GM12878 (cell line): ENCODE measurements at regions of chr1 and their contacts with region 1.

Region 1: GRCh38 chr1:116826818-116827606 is 72.8 kb downstream of the CD2 start:
- DNase-seq: peak; percentile 97
- ATAC-seq: peak; percentile 87
- H3K4me3 ChIP-seq: no peak overlapping the region
- H3K27ac ChIP-seq: peak overlapping the region; percentile 60
- H3K4me1 ChIP-seq: peaks cover 23% of the 10 kb centered on the region
- H3K27me3 ChIP-seq: no peaks in the 10 kb centered on the region; a peak in 1 of 4 replicates
- CTCF ChIP-seq: no peak
- EP300 ChIP-seq: peak; percentile 17 to 90; a peak in 2 of 4 replicates
- POLR2A ChIP-seq: no peak
- RAD21 ChIP-seq: 0 out of 2 replicates have a peak, but pooled peaks have one; percentile 10

Region 2: DNA sequence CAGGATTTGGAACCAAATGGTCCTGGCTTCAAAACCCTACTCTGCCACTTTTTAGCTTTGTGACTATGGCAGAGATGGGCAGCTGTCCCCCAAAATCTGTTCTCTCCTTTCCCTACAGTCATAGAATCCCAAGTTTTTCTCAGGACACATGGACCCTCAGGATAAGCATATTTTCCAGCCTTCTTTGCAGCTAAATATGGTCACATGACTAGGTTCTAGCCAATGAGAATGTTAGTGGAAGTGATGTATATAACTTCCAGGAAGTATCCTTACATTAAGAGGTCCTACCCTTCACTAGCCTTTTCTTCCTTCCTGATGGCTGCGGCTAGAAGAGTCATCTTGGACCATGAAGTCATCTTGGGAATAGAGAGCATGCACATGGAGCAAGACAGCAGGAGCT is 165.4 kb before region 1 on chr1:
- CTCF ChIA-PET with region 1: no interaction called
- POLR2A ChIA-PET with region 1: no interaction called
- RAD21 ChIA-PET with region 1: no interaction called
- SMC1A ChIA-PET with region 1: no interaction called
- in situ Hi-C with region 1: no loop called
- intact Hi-C with region 1: no loop called
- DNase-seq: no peak
- ATAC-seq: no peak
- H3K4me3 ChIP-seq: no peak overlapping the region
- H3K27ac ChIP-seq: no peak overlapping the region
- H3K4me1 ChIP-seq: no peaks in the 10 kb centered on the region
- H3K27me3 ChIP-seq: peaks cover 0 to 12% of the 10 kb centered on the region in 2 experiments; a peak in 2 of 4 replicates
- CTCF ChIP-seq: no peak
- EP300 ChIP-seq: no peak
- POLR2A ChIP-seq: no peak
- RAD21 ChIP-seq: no peak

Region 3: GRCh38 chr1:116763787-116764465 is 63.1 kb before region 1 on chr1:
- CTCF ChIA-PET with region 1: interaction called, 9 read pairs
- POLR2A ChIA-PET with region 1: interaction called, 15 read pairs
- RAD21 ChIA-PET with region 1: interaction called, 45 read pairs
- SMC1A ChIA-PET with region 1: interaction called, 64 read pairs
- in situ Hi-C with region 1: no loop called
- intact Hi-C with region 1: no loop called
- DNase-seq: no peak
- ATAC-seq: peak; percentile 22
- H3K4me3 ChIP-seq: no peak overlapping the region
- H3K27ac ChIP-seq: no peak overlapping the region
- H3K4me1 ChIP-seq: peaks cover 10% of the 10 kb centered on the region
- H3K27me3 ChIP-seq: no peaks in the 10 kb centered on the region; a peak in 1 of 4 replicates
- CTCF ChIP-seq: peak; percentile 25 to 41 (median 36); a peak in 5 of 6 replicates
- EP300 ChIP-seq: no peak
- POLR2A ChIP-seq: no peak
- RAD21 ChIP-seq: peak; percentile 44

Region 4: GRCh38 chr1:116794804-116795481 is 32.1 kb before region 1 on chr1:
- CTCF ChIA-PET with region 1: interaction called, 4 read pairs
- POLR2A ChIA-PET with region 1: interaction called, 12 read pairs
- RAD21 ChIA-PET with region 1: interaction called, 26 read pairs
- SMC1A ChIA-PET with region 1: interaction called, 13 read pairs
- in situ Hi-C with region 1: no loop called
- intact Hi-C with region 1: no loop called
- DNase-seq: peak; percentile 87
- ATAC-seq: peak; percentile 96
- H3K4me3 ChIP-seq: peak overlapping the region; percentile 14; the same call in 1 of the 2 replicates
- H3K27ac ChIP-seq: peak overlapping the region; percentile 57
- H3K4me1 ChIP-seq: peaks cover 11% of the 10 kb centered on the region
- H3K27me3 ChIP-seq: no peaks in the 10 kb centered on the region
- CTCF ChIP-seq: no peak
- EP300 ChIP-seq: peak; percentile 71 to 87
- POLR2A ChIP-seq: no peak
- RAD21 ChIP-seq: no peak

Region 5: DNA sequence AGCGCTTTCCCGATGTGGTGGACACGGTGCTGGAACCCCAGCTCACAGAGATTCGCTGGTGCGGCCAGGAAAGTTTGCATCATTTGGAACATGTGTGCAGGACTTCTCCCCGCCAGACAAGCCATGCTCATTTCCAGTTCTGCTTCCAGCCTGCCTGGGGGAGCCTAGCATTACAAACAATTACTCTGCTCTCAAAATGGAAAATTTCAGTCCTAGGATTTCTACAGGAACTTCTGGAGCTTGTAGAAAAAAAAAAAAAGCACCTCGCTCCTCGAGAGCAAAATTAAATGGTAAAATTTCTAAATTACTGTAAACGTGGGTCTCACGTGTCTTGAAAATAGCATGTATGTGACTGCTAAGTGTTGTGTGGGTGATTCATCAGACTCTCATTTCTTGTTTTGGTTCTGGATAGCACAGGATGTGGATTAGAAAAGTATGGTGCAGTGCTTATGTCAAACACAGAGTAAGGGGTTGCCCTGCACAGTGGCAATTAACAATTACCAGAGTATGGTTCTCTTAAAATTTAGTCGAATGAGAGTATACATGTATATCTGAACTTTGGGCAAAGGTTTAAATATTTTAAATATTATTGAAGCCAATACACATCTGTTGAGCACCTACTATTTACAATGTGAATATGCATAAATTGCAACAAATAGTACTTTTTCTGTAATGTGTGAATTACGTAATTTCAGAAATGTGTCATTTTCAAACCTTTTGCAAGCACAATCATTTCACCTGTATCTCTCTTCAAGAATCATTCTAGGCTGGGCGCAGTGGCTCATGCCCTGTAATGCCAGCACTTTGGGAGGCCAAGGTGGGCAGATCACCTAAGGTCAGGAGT is 20.9 kb after region 1 on chr1:
- CTCF ChIA-PET with region 1: interaction called, 21 read pairs
- POLR2A ChIA-PET with region 1: interaction called, 10 read pairs
- RAD21 ChIA-PET with region 1: interaction called, 35 read pairs
- SMC1A ChIA-PET with region 1: interaction called, 35 read pairs
- in situ Hi-C with region 1: no loop called
- intact Hi-C with region 1: no loop called
- DNase-seq: no peak
- ATAC-seq: peak; percentile 93
- H3K4me3 ChIP-seq: no peak overlapping the region
- H3K27ac ChIP-seq: no peak overlapping the region
- H3K4me1 ChIP-seq: peaks cover 6% of the 10 kb centered on the region; the same call in 1 of the 2 replicates
- H3K27me3 ChIP-seq: no peaks in the 10 kb centered on the region
- CTCF ChIP-seq: no peak
- EP300 ChIP-seq: no peak; a peak in 2 of 4 replicates
- POLR2A ChIP-seq: no peak
- RAD21 ChIP-seq: no peak

Region 6: GRCh38 chr1:116910379-116911187 is 83.6 kb after region 1 on chr1:
- CTCF ChIA-PET with region 1: interaction called, 3 read pairs
- POLR2A ChIA-PET with region 1: no interaction called
- RAD21 ChIA-PET with region 1: no interaction called
- SMC1A ChIA-PET with region 1: interaction called, 17 read pairs
- in situ Hi-C with region 1: no loop called
- intact Hi-C with region 1: no loop called
- DNase-seq: no peak
- ATAC-seq: peak; percentile 59
- H3K4me3 ChIP-seq: no peak overlapping the region
- H3K27ac ChIP-seq: no peak overlapping the region
- H3K4me1 ChIP-seq: no peaks in the 10 kb centered on the region
- H3K27me3 ChIP-seq: peaks cover 0 to 13% of the 10 kb centered on the region in 2 experiments; a peak in 2 of 4 replicates
- CTCF ChIP-seq: no peak
- EP300 ChIP-seq: no peak
- POLR2A ChIP-seq: no peak
- RAD21 ChIP-seq: no peak

Region 7: GRCh38 chr1:117001254-117001927 is 174.4 kb after region 1 on chr1 and contains the start of gene CD101:
- CTCF ChIA-PET with region 1: no interaction called
- POLR2A ChIA-PET with region 1: no interaction called
- RAD21 ChIA-PET with region 1: interaction called, 5 read pairs
- SMC1A ChIA-PET with region 1: interaction called, 4 read pairs
- in situ Hi-C with region 1: no loop called
- intact Hi-C with region 1: loop called (anchors 5 kb)
- DNase-seq: peak; percentile 82
- ATAC-seq: peak; percentile 95
- H3K4me3 ChIP-seq: peak within 1 kb of the TSS; percentile 6; the same call in 1 of the 2 replicates
- H3K27ac ChIP-seq: peak within 1 kb of the TSS; percentile 49
- H3K4me1 ChIP-seq: peaks cover 20% of the 10 kb centered on the region
- H3K27me3 ChIP-seq: no peaks in the 10 kb centered on the region
- CTCF ChIP-seq: no peak
- EP300 ChIP-seq: peak; percentile 66 to 85
- POLR2A ChIP-seq: no peak
- RAD21 ChIP-seq: peak; percentile 36; the same call in 1 of the 2 replicates
- polyA plus RNA-seq, gene CD101: 1.9 to 2.7 TPM